ENCODE measurements at regions of chr9 and their contacts with region 1.

Region 1: GRCh38 chr9:133144137-133144903 is 19.4 kb downstream of the GBGT1 start:
- DNase-seq: no peak
- H3K4me3 ChIP-seq: peak overlapping the region; percentile 49
- H3K27ac ChIP-seq: no peak overlapping the region
- H3K27me3 ChIP-seq: no peaks in the 10 kb centered on the region
- CTCF ChIP-seq: peak; percentile 86

Region 2: GRCh38 chr9:132946624-132947295 is 197.6 kb before region 1 on chr9:
- CTCF ChIA-PET with region 1: no interaction called
- POLR2A ChIA-PET with region 1: no interaction called
- DNase-seq: no peak
- H3K4me3 ChIP-seq: no peak overlapping the region
- H3K27ac ChIP-seq: no peak overlapping the region
- H3K27me3 ChIP-seq: no peaks in the 10 kb centered on the region
- CTCF ChIP-seq: no peak

Region 3: GRCh38 chr9:133030317-133031129 is 113.8 kb before region 1 on chr9 and contains the start of gene GTF3C5:
- CTCF ChIA-PET with region 1: interaction called, 25 read pairs
- POLR2A ChIA-PET with region 1: interaction called, 5 read pairs
- DNase-seq: peak; percentile 96
- H3K4me3 ChIP-seq: peak within 1 kb of the TSS; percentile 96
- H3K27ac ChIP-seq: peak within 1 kb of the TSS; percentile 83
- H3K27me3 ChIP-seq: no peaks in the 10 kb centered on the region
- CTCF ChIP-seq: peak; percentile 14; the same call in 1 of the 2 replicates
- polyA plus RNA-seq, gene GTF3C5: 36.4 and 39.2 TPM in 2 replicates

Region 4: DNA sequence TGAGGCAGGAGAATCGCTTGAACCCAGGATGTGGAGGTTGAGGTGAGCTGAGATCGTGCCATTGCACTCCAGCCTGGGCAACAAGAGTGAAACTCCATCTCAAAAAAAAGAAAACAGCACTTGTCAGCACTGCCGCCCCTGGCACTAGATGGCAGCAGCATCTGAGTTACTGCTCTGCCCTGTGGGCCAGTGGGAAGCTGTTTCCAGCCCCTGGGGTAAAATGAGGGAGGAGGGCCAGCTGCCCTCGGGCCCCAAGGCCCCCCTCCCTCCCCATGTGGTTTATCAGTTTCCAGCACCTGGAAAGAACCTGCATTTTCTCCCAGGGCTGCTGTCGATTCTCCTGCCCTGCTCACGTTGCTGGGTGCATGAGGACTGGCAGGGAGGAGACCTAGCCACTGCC is 95.8 kb before region 1 on chr9:
- CTCF ChIA-PET with region 1: interaction called, 23 read pairs
- POLR2A ChIA-PET with region 1: no interaction called
- DNase-seq: no peak
- H3K4me3 ChIP-seq: no peak overlapping the region
- H3K27ac ChIP-seq: no peak overlapping the region
- H3K27me3 ChIP-seq: no peaks in the 10 kb centered on the region
- CTCF ChIP-seq: peak; percentile 44

Region 5: GRCh38 chr9:133089271-133089671 is 55.0 kb before region 1 on chr9:
- CTCF ChIA-PET with region 1: interaction called, 10 read pairs
- POLR2A ChIA-PET with region 1: no interaction called
- DNase-seq: no peak
- H3K4me3 ChIP-seq: no peak overlapping the region
- H3K27ac ChIP-seq: no peak overlapping the region
- H3K27me3 ChIP-seq: peaks cover 2% of the 10 kb centered on the region
- CTCF ChIP-seq: no peak

Region 6: DNA sequence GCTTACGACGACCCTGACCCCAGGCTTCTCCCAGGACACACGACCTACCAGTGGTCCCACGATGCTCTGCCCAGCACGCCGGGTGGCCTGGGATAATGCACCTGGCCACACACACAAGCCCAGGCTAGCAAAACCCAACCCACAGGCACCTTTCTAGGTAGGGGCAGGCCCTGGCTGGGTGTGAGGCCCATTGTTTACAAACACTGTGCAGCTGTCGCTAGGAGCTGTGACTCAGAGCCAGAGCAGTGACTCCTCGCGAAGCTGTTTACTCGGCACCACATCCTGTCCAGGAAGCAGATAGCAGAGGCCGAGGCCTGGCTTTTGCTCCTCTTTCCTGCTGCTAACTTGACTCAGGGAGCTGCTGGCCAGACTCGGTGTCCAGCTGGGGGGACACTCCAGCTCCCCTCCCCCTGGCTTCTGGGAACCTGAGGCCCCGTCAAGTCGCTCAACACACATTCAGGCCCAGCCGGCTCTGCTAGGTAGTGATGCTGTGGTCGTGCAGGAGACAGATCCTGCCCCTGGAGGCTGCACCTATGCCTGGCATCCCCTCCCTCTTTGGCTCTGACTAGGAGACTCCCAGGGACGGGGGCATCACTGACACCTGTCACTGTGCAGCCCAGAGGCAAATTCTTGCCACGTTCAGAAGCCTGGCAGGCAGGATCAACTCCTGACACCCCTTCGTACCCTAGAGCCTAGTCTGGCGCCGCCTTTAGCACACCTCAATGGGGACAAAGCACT is 10.5 kb before region 1 on chr9:
- CTCF ChIA-PET with region 1: interaction called, 53 read pairs
- POLR2A ChIA-PET with region 1: interaction called, 4 read pairs
- DNase-seq: peak; percentile 76
- H3K4me3 ChIP-seq: no peak overlapping the region
- H3K27ac ChIP-seq: peak overlapping the region; percentile 89
- H3K27me3 ChIP-seq: no peaks in the 10 kb centered on the region
- CTCF ChIP-seq: no peak

Region 7: DNA sequence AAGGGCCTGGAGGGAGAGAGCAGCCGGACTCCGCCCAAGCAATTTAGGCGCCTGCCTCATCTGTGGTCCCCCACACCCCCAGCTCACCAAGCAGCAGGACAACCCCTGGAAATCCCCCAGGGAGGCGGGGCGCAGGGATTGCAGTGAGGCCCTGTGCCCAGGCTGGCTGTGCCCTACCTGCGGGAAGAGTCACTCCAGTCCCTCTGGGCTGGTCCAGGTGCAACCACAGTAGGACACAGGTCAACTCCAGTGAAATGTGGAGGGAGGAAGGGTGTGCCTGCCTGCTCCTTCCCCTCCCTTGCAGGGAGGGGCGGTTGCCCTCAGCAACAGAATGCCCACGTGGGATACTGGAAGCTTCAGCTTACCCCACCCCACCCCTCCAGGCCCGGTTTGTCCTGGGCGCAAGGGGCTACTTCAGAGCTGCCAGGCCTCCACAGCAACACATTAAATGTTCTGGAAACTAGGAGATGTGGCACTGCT is 108.0 kb after region 1 on chr9:
- CTCF ChIA-PET with region 1: no interaction called
- POLR2A ChIA-PET with region 1: no interaction called
- DNase-seq: no peak
- H3K4me3 ChIP-seq: no peak overlapping the region
- H3K27ac ChIP-seq: no peak overlapping the region
- H3K27me3 ChIP-seq: peaks cover 10% of the 10 kb centered on the region
- CTCF ChIP-seq: no peak

Measured in AG04450 (cell line).